ENCODE measurements at regions of chr4 and their contacts with region 1.

Region 1: DNA sequence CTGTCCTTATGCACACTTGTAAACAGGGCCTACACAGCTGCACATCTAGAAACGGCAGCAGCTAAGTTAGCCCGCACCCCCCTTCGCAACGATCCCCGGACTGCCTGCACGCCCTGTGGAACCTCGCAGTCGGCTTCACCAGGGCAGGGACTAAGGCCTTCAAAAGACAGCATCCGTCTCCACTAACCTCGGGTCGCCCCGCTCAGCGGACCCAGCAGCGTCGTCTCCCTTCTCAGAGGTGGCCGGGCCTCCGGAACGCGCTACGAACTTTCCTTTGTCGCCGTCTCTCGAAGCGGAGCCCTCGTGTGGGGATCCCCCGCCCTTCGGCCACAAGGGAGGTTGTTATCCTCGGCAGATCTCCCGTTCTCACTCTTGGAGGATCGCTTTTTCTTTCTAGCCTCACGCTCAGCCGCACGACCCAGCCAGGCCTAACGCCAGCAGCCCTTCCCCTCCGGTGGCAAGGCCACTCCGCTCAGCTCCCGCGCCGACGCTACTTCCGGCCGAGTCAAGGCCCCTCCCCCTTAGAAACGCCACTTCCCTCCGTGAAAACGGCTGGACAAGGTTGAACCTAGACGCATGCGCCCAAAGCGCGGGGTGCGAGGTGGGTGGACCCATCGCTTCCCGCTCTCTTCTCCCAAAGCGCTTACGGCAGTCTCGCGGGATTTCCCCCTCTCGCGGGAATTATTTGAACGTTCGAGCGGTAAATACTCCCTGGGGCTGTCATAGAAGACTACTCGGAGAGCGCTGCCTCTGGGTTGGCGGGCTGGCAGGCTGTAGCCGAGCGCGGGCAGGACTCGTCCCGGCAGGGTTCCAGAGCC is at the starts of genes DCAF16 and NCAPG:
- DNase-seq: peak; percentile 97 to 100 (median 99)
- ATAC-seq: peak; percentile 86
- H3K4me3 ChIP-seq: peak within 1 kb of the TSS; percentile 92
- H3K4me3 Mint-ChIP-seq: peak within 1 kb of the TSS; percentile 97
- H3K27ac ChIP-seq: peak within 1 kb of the TSS; percentile 92 to 96
- H3K27ac Mint-ChIP-seq: peak within 1 kb of the TSS; percentile 96
- H3K4me1 ChIP-seq: peaks cover 20% of the 10 kb centered on the region
- H3K4me1 Mint-ChIP-seq: peaks cover 63% of the 10 kb centered on the region
- H3K27me3 ChIP-seq: no peaks in the 10 kb centered on the region
- H3K27me3 Mint-ChIP-seq: no peaks in the 10 kb centered on the region
- CTCF ChIP-seq: no peak
- total RNA-seq, gene DCAF16: 88.5 to 91.4 TPM
- total RNA-seq, gene NCAPG: 0.58 to 0.61 TPM

Region 2: DNA sequence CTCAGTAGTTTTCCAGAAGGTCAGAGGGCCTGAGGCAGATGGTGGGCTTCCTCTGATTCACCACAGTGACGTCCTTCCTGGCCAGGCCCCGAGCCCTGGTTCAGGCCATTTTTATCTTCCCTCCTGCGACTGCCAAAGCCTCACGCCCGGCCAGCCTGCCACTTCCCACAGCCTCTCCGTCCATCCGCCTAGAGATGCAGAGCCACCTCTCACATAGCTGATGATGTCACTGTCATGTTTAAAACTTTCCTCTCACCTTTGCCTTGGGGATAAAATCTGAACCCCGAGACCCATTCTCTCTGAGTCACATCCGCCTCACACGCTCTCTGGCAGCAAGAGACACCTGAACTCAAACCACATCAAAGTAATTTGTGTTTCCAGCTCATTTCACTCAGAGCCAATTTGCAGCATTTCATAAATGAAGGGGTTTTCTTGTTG is 473.9 kb before region 1 on chr4:
- CTCF ChIA-PET with region 1: no interaction called
- POLR2A ChIA-PET with region 1: no interaction called
- intact Hi-C with region 1: loop called in 1 of 2 experiments (anchors 5 kb)
- DNase-seq: peak; percentile 41 to 92 (median 63)
- ATAC-seq: peak; percentile 97
- H3K4me3 ChIP-seq: no peak overlapping the region
- H3K4me3 Mint-ChIP-seq: peak overlapping the region; percentile 17
- H3K27ac ChIP-seq: no peak overlapping the region
- H3K27ac Mint-ChIP-seq: peak overlapping the region; percentile 62
- H3K4me1 ChIP-seq: peaks cover 27% of the 10 kb centered on the region
- H3K4me1 Mint-ChIP-seq: peaks cover 24% of the 10 kb centered on the region
- H3K27me3 ChIP-seq: no peaks in the 10 kb centered on the region
- H3K27me3 Mint-ChIP-seq: no peaks in the 10 kb centered on the region
- CTCF ChIP-seq: no peak

Region 3: GRCh38 chr4:18529482-18529881 is 719.0 kb after region 1 on chr4:
- CTCF ChIA-PET with region 1: no interaction called
- POLR2A ChIA-PET with region 1: no interaction called
- intact Hi-C with region 1: no loop called
- DNase-seq: no peak
- ATAC-seq: no peak
- H3K4me3 ChIP-seq: no peak overlapping the region
- H3K4me3 Mint-ChIP-seq: no peak overlapping the region
- H3K27ac ChIP-seq: no peak overlapping the region
- H3K27ac Mint-ChIP-seq: no peak overlapping the region
- H3K4me1 ChIP-seq: no peaks in the 10 kb centered on the region
- H3K4me1 Mint-ChIP-seq: no peaks in the 10 kb centered on the region
- H3K27me3 ChIP-seq: no peaks in the 10 kb centered on the region
- H3K27me3 Mint-ChIP-seq: no peaks in the 10 kb centered on the region
- CTCF ChIP-seq: no peak

Region 4: GRCh38 chr4:18695733-18696527 is 885.5 kb after region 1 on chr4:
- CTCF ChIA-PET with region 1: no interaction called
- POLR2A ChIA-PET with region 1: no interaction called
- intact Hi-C with region 1: no loop called
- DNase-seq: no peak
- ATAC-seq: no peak
- H3K4me3 ChIP-seq: no peak overlapping the region
- H3K4me3 Mint-ChIP-seq: no peak overlapping the region
- H3K27ac ChIP-seq: no peak overlapping the region
- H3K27ac Mint-ChIP-seq: no peak overlapping the region
- H3K4me1 ChIP-seq: no peaks in the 10 kb centered on the region
- H3K4me1 Mint-ChIP-seq: no peaks in the 10 kb centered on the region
- H3K27me3 ChIP-seq: no peaks in the 10 kb centered on the region
- H3K27me3 Mint-ChIP-seq: no peaks in the 10 kb centered on the region
- CTCF ChIP-seq: no peak

Measured in CD4-positive, alpha-beta T cell (primary cell).